Heart left ventricle (tissue), 16 donors: ENCODE measurements at regions of chr1 and their contacts with region 1.

Region 1: GRCh38 chr1:71343686-71344416 is 263.0 kb upstream of the ZRANB2 start:
- DNase-seq: no peak
- ATAC-seq: no peak
- H3K4me3 ChIP-seq: no peak overlapping the region
- H3K27ac ChIP-seq: no peak overlapping the region
- H3K4me1 ChIP-seq: no peaks in the 10 kb centered on the region
- H3K27me3 ChIP-seq: no peaks in the 10 kb centered on the region
- CTCF ChIP-seq: no peak
- POLR2A ChIP-seq: no peak

Region 2: DNA sequence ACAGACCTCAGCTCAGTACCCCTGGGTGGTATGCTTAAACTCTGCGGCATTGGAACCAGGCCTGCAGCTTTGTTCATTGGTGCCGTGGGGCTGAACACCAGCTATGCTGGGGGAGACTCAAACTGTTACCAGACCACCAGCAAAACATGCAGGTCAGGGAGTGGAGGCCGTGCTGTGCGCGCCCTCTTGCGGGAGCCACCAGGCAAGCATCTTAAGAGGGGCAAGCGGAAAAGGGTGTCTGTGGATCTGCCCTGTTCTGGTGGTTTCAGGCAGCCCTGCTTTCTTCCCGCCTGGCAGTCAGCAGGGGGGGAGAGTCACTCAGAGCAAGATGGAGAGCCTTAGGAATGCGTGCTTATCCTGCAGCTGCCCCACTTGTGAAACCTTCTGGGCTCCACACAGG is 13.9 kb after region 1 on chr1:
- intact Hi-C with region 1: loop called in 1 of 10 experiments (anchors 1 kb)
- DNase-seq: no peak
- ATAC-seq: no peak
- H3K4me3 ChIP-seq: no peak overlapping the region
- H3K27ac ChIP-seq: no peak overlapping the region
- H3K4me1 ChIP-seq: no peaks in the 10 kb centered on the region
- H3K27me3 ChIP-seq: no peaks in the 10 kb centered on the region
- CTCF ChIP-seq: no peak
- POLR2A ChIP-seq: no peak

Region 3: DNA sequence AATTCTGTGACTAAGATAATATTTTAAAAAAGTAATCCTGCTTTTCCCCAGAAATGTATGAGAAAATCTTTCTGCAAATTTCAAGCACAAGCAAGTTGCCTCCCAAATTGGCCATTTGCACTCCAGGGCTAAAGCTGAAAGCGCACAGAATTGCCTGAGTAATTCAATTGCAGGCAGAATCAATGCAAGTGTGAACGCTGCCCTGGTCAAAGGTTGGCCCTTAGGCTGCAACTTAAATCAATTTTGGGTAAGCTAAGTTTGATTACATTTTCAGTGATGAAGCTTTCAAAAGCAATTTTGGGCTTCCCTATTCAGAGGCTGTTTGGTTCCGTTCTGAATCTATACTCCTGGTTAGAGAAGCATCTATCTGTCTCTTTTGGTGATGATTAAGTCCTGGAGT is 238.8 kb after region 1 on chr1:
- intact Hi-C with region 1: no loop called
- DNase-seq: no peak
- ATAC-seq: no peak
- H3K4me3 ChIP-seq: no peak overlapping the region
- H3K27ac ChIP-seq: no peak overlapping the region
- H3K4me1 ChIP-seq: peaks cover 0 to 3% (median 0%) of the 10 kb centered on the region in 12 donors
- H3K27me3 ChIP-seq: no peaks in the 10 kb centered on the region
- CTCF ChIP-seq: no peak
- POLR2A ChIP-seq: no peak